Activated CD8-positive, alpha-beta T cell treated with anti-CD3 and anti-CD28 coated beads, Interleukin-2, amount 10 ng/mL, durations not matched to agents 7 days and 5 days (primary cell): ENCODE measurements at regions of chr6 and their contacts with region 1.

Region 1: DNA sequence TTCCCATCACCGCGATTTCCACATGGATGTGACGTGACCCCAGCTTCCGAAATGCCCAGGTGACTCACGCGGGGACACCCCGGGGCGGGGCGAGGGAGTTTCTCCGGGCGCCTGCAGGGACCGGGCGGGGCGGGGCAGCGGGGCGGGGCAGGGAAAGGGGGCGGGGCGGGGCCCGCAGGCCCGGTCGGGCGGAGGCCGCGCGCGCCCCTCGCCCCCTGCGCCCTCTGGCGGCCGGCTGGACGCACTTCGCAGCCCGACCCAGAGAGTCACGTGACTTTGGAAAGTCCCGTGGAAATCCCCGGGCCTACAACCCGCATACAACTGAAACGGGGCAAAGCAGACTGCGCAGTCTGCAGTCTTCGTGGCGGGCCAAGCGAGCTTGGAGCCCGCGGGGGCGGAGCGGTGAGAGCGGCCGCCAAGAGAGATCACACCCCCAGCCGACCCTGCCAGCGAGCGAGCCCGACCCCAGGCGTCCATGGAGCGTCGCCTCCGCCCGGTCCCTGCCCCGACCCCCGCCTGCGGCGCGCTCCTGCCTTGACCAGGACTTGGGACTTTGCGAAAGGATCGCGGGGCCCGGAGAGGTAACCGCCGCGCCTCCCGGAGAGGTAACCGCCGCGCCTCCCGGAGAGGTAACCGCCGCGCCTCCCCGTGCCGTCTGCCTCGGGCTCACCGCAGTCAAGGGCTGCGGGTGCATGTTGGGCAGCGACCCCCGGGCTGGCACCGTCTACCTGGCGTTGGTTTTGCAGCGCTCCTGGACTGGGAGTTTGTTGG is at the start of gene TNFAIP3:
- DNase-seq: peak; percentile 94
- ATAC-seq: peak; percentile 82
- H3K4me3 Mint-ChIP-seq: peak within 1 kb of the TSS; percentile 94
- H3K27ac Mint-ChIP-seq: peak within 1 kb of the TSS; percentile 92
- H3K4me1 Mint-ChIP-seq: peaks cover 59% of the 10 kb centered on the region
- H3K27me3 Mint-ChIP-seq: no peaks in the 10 kb centered on the region
- total RNA-seq, gene TNFAIP3: 29.6 to 34.5 TPM

Region 2: GRCh38 chr6:137697267-137697938 is 169.7 kb before region 1 on chr6:
- CTCF ChIA-PET with region 1: interaction called, 60 read pairs
- POLR2A ChIA-PET with region 1: interaction called, 7 read pairs
- DNase-seq: no peak
- ATAC-seq: peak; percentile 17
- H3K4me3 Mint-ChIP-seq: no peak overlapping the region
- H3K27ac Mint-ChIP-seq: no peak overlapping the region
- H3K4me1 Mint-ChIP-seq: peaks cover 38% of the 10 kb centered on the region
- H3K27me3 Mint-ChIP-seq: peaks cover 5% of the 10 kb centered on the region

Region 3: GRCh38 chr6:137791281-137792159 is 75.6 kb before region 1 on chr6:
- CTCF ChIA-PET with region 1: interaction called, 399 read pairs
- POLR2A ChIA-PET with region 1: interaction called, 15 read pairs
- DNase-seq: no peak
- ATAC-seq: no peak
- H3K4me3 Mint-ChIP-seq: peak overlapping the region; percentile 46
- H3K27ac Mint-ChIP-seq: no peak overlapping the region
- H3K4me1 Mint-ChIP-seq: peaks cover 60% of the 10 kb centered on the region
- H3K27me3 Mint-ChIP-seq: no peaks in the 10 kb centered on the region

Region 4: GRCh38 chr6:137823826-137824555 is 43.1 kb before region 1 on chr6:
- CTCF ChIA-PET with region 1: interaction called, 57 read pairs
- POLR2A ChIA-PET with region 1: interaction called, 36 read pairs
- DNase-seq: peak; percentile 75
- ATAC-seq: peak; percentile 74
- H3K4me3 Mint-ChIP-seq: peak overlapping the region; percentile 70
- H3K27ac Mint-ChIP-seq: peak overlapping the region; percentile 97
- H3K4me1 Mint-ChIP-seq: peaks cover 82% of the 10 kb centered on the region
- H3K27me3 Mint-ChIP-seq: no peaks in the 10 kb centered on the region

Region 5: DNA sequence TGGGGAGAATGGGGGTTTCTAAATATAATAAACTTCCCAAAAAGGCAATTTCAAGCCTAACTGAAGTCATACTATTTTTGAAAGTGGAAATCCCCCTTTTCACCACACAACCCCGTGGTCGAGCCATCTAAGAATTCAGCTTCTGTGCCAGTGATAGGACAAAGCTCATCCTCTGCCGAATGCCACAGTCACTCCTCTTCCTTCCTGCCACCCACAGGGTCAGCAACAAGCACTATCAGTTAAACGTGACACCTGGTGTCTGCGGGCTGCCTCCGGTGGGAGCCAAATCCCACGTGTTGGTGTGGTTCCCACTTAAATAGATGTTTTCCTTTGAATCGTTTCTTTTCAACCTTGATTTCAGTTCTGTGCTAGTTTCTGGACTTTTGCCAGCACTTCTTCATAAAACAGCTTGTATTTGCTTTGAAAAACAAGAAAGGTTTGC is 60.7 kb after region 1 on chr6:
- CTCF ChIA-PET with region 1: interaction called, 555 read pairs
- POLR2A ChIA-PET with region 1: interaction called, 6 read pairs
- DNase-seq: peak; percentile 87
- ATAC-seq: peak; percentile 99
- H3K4me3 Mint-ChIP-seq: peak overlapping the region; percentile 52
- H3K27ac Mint-ChIP-seq: peak overlapping the region; percentile 69
- H3K4me1 Mint-ChIP-seq: peaks cover 45% of the 10 kb centered on the region
- H3K27me3 Mint-ChIP-seq: no peaks in the 10 kb centered on the region

Region 6: GRCh38 chr6:138001750-138002349 is 134.8 kb after region 1 on chr6:
- CTCF ChIA-PET with region 1: interaction called, 51 read pairs
- POLR2A ChIA-PET with region 1: interaction called, 4 read pairs
- DNase-seq: peak; percentile 74
- ATAC-seq: peak; percentile 36
- H3K4me3 Mint-ChIP-seq: no peak overlapping the region
- H3K27ac Mint-ChIP-seq: no peak overlapping the region
- H3K4me1 Mint-ChIP-seq: peaks cover 14% of the 10 kb centered on the region
- H3K27me3 Mint-ChIP-seq: peaks cover 2% of the 10 kb centered on the region